HEK293 (cell line): ENCODE measurements at regions of chr12 and their contacts with region 1.

Region 1: DNA sequence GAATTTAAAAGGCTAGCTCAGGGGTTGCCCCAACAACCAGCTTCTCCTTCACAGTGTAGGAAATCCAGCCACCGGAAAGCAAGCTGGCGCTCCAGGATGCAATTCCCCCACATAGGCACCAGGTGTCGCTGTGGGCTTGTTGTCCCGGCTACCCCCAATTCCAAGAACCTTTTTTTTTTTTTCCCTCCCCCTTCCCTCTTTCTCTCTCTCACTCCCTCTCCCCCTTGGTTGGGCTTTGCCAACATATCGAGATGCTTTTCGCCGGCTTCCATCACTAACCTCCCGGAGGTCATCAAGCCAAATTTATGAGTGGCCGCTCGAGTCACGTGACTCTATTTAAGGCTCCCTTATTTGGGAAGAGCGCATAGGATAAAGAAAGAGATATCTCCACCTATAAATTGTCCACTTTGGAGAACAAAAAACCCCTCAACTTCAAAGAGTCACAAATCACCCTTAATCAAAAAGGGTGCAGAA is at the start of gene HOXC5:
- H3K4me3 ChIP-seq: peak within 1 kb of the TSS; percentile 29
- H3K27ac ChIP-seq: peak within 1 kb of the TSS; percentile 100
- H3K4me1 ChIP-seq: peaks cover 45% of the 10 kb centered on the region
- CTCF ChIP-seq: peak; percentile 99

Region 2: GRCh38 chr12:53961025-53961761 is 71.5 kb before region 1 on chr12:
- CTCF ChIA-PET with region 1: no interaction called
- POLR2A ChIA-PET with region 1: no interaction called
- H3K4me3 ChIP-seq: no peak overlapping the region
- H3K27ac ChIP-seq: no peak overlapping the region
- H3K4me1 ChIP-seq: peaks cover 30% of the 10 kb centered on the region
- CTCF ChIP-seq: no peak

Region 3: GRCh38 chr12:53974084-53975063 is 58.3 kb before region 1 on chr12 and contains the start of gene HOTAIR:
- CTCF ChIA-PET with region 1: no interaction called
- POLR2A ChIA-PET with region 1: no interaction called
- H3K4me3 ChIP-seq: peak within 1 kb of the TSS; percentile 38
- H3K27ac ChIP-seq: peak within 1 kb of the TSS; percentile 97
- H3K4me1 ChIP-seq: peaks cover 65% of the 10 kb centered on the region
- CTCF ChIP-seq: no peak

Region 4: DNA sequence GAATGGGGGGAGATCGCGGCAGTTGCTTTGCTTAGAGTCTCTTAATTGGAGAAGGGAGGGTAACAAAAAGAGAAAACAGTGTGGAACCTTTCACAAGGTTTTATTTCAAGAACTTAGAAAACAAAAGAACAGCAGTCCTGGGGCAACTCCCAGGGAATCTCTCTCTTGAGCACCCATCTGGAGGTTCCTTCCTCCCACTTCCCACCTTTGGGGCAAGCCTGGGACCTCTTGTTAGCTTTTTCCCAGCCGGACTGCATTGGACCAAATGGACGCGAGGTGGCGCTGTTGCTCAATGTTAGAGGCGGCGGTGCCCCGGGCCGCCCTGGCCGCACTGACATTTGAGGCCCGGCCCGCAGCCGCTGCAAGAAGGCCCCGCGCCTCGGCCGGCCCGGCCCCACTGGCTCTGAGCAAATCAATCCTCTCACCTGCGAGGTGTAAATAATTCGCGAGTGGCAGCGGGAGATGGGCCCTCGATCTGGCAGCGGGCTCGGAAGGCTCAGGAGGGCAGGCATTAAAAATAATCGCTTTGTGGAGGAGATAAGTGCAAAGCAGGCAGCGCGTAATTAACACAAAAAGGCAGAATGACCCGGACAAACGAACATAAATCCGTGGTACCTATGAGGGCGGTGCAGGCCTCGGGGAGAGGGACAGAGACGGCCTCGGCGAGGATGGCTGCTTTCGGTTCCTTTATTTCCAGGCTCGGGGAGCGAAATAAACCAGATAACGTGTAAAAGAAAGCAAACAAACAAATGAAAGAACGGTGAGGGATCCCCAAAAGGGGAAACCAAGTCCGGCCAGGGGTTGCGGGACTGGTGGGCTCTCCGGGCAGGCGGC is 26.6 kb before region 1 on chr12:
- CTCF ChIA-PET with region 1: interaction called, 44 read pairs
- POLR2A ChIA-PET with region 1: interaction called, 8 read pairs
- H3K4me3 ChIP-seq: no peak overlapping the region
- H3K27ac ChIP-seq: peak overlapping the region; percentile 45; the same call in 1 of the 2 replicates
- H3K4me1 ChIP-seq: peaks cover 40% of the 10 kb centered on the region
- CTCF ChIP-seq: peak; percentile 88

Region 5: DNA sequence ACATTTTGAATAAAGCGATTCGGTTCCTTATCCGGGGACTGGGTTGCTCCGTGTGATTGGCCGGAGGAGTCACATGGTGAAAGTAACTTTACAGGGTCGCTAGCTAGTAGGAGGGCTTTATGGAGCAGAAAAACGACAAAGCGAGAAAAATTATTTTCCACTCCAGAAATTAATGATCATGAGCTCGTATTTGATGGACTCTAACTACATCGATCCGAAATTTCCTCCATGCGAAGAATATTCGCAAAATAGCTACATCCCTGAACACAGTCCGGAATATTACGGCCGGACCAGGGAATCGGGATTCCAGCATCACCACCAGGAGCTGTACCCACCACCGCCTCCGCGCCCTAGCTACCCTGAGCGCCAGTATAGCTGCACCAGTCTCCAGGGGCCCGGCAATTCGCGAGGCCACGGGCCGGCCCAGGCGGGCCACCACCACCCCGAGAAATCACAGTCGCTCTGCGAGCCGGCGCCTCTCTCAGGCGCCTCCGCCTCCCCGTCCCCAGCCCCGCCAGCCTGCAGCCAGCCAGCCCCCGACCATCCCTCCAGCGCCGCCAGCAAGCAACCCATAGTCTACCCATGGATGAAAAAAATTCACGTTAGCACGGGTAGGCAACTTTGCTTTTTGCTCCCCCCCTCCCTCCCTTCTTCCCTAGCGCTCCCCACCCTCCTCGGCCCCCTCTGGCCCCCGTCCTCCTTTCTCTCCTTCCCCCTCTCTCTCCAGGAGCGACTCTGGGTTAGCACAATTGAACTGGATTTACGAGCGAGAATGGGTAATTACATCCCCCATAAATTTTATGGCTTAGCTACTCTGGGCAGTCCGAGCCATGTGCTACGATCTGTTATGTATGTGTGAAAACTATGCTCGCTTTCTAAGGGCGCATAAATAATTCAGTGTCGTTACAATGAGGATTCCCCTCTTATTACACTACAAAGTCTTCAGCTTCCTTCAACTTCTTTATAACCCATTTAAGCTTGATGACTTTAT is 21.4 kb after region 1 on chr12 and contains the start of gene HOXC4:
- CTCF ChIA-PET with region 1: interaction called, 12 read pairs
- POLR2A ChIA-PET with region 1: interaction called, 18 read pairs
- H3K4me3 ChIP-seq: peak within 1 kb of the TSS; percentile 54
- H3K27ac ChIP-seq: peak within 1 kb of the TSS; percentile 99
- H3K4me1 ChIP-seq: peaks cover 73% of the 10 kb centered on the region
- CTCF ChIP-seq: peak; percentile 26; the same call in 1 of the 2 replicates

Region 6: GRCh38 chr12:54134850-54135249 is 102.2 kb after region 1 on chr12:
- CTCF ChIA-PET with region 1: interaction called, 71 read pairs
- POLR2A ChIA-PET with region 1: interaction called, 7 read pairs
- H3K4me3 ChIP-seq: no peak overlapping the region
- H3K27ac ChIP-seq: peak overlapping the region; percentile 17; the same call in 1 of the 2 replicates
- H3K4me1 ChIP-seq: peaks cover 12% of the 10 kb centered on the region
- CTCF ChIP-seq: peak; percentile 70

Region 7: DNA sequence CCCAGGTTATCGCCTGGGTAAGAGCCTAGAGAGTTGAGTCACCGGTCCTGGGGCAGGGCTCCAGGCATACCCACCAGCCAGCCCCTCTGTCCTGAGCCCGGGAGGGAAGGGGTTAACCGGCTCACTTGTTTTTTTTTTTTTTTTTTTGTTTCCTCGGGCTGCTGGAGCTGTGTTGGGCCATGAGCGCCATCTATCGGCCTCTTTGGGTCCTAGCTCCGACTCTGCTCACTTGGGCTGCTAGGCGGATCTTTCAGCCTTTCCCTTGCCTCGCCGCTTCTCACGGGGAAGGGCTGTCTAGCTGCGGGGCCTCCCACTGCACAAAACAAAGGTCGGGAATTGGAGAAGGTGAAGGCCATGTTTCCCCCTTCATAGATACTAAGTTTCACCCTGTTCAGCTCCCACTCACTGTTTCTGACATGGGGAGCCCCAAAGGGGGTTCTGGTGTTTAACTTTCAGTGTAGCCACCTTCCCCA is 158.9 kb after region 1 on chr12:
- CTCF ChIA-PET with region 1: interaction called, 109 read pairs
- POLR2A ChIA-PET with region 1: interaction called, 4 read pairs
- H3K4me3 ChIP-seq: no peak overlapping the region
- H3K27ac ChIP-seq: peak overlapping the region; percentile 43; the same call in 1 of the 2 replicates
- H3K4me1 ChIP-seq: peaks cover 14% of the 10 kb centered on the region
- CTCF ChIP-seq: peak; percentile 97

Region 8: GRCh38 chr12:54207484-54208294 is 175.0 kb after region 1 on chr12:
- CTCF ChIA-PET with region 1: interaction called, 78 read pairs
- POLR2A ChIA-PET with region 1: interaction called, 5 read pairs
- H3K4me3 ChIP-seq: no peak overlapping the region
- H3K27ac ChIP-seq: 0 out of 2 replicates have a peak overlapping the region, but pooled peaks have one; percentile 13
- H3K4me1 ChIP-seq: no peaks in the 10 kb centered on the region
- CTCF ChIP-seq: peak; percentile 89